ENCODE measurements at regions of chrX and their contacts with region 1.

Region 1: GRCh38 chrX:49155900-49156837 is 6.4 kb upstream of the MAGIX start:
- DNase-seq: peak; percentile 91
- H3K4me3 Mint-ChIP-seq: peak overlapping the region; percentile 96
- H3K27ac Mint-ChIP-seq: peak overlapping the region; percentile 99
- H3K4me1 Mint-ChIP-seq: peaks cover 7% of the 10 kb centered on the region
- H3K27me3 Mint-ChIP-seq: no peaks in the 10 kb centered on the region
- CTCF ChIP-seq: peak; percentile 46

Region 2: DNA sequence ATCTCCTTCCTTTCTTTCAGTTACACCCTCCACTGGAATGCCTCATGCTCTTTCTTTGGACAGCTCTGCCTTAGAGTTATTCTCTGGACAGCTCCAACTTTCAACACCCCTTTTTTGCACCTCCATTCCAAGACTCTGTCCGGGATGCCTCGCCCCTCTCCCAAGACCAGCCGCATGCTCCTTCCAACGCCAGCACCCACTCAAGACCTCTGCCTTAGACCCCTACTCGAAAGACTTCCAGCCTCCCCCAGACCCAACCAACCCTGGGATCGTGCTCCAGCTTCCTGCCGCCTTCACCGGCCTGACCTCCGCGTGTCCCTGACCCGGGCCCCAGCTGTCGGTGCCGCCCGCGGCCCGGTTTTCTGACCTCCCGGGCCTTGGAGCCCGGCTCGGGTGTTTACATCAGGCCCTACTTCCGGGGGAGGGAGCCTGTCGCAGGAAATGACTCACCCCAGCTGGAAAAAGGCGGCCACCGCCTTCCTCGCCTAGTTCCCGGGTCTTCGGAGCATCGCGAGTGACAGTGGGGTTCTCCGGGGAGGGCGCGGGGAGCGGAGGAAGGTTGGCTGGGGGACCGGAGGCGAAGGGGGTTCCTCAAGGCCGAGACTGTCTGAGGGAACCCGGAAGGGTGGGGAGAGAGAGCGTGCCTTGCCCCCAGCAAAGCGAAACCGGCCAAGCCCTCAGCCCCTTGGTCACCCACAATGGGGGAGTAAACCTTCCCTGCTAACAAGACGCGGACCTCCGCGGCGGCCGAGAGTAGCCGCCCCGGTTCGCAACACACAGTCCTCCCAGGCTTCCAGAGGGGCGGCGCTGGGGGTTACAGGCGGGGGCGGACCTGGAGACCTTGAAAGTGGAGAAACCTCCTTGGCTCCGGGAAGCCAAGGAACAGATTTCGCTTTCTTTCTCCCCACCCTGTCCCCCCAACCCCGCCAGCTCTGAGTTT is 76.4 kb before region 1 on chrX and contains the start of gene WDR45:
- CTCF ChIA-PET with region 1: interaction called, 7 read pairs
- POLR2A ChIA-PET with region 1: interaction called, 11 read pairs
- intact Hi-C with region 1: no loop called
- DNase-seq: peak; percentile 68
- H3K4me3 Mint-ChIP-seq: peak within 1 kb of the TSS; percentile 86
- H3K27ac Mint-ChIP-seq: peak within 1 kb of the TSS; percentile 88
- H3K4me1 Mint-ChIP-seq: peaks cover 5% of the 10 kb centered on the region
- H3K27me3 Mint-ChIP-seq: no peaks in the 10 kb centered on the region
- CTCF ChIP-seq: no peak
- total RNA-seq, gene WDR45: 93.0 and 96.9 TPM in 2 replicates

Region 3: DNA sequence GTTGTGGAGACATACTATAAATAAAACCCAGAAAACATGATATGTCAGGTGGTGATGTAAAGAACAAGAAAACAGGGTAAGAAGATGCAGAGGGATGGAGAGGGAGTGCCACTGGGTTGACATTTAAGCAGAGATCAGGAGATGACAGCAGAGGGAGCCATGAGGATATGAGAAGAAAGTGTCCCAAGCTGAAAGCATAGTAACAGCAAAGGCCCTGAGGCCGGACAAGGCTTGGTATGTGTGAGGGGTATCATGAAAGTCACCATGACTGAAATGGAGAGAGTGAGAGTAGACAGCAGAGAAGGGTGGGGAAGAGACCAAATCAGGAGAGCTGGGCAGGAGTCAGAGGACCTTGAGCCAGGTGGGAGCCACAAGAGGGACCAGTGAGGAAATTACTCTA is 36.1 kb before region 1 on chrX:
- CTCF ChIA-PET with region 1: no interaction called
- POLR2A ChIA-PET with region 1: no interaction called
- intact Hi-C with region 1: loop called (anchors 5 kb)
- DNase-seq: no peak
- H3K4me3 Mint-ChIP-seq: no peak overlapping the region
- H3K27ac Mint-ChIP-seq: no peak overlapping the region
- H3K4me1 Mint-ChIP-seq: no peaks in the 10 kb centered on the region
- H3K27me3 Mint-ChIP-seq: no peaks in the 10 kb centered on the region
- CTCF ChIP-seq: no peak

Region 4: GRCh38 chrX:49291615-49292337 is 135.6 kb after region 1 on chrX:
- CTCF ChIA-PET with region 1: no interaction called
- POLR2A ChIA-PET with region 1: no interaction called
- intact Hi-C with region 1: no loop called
- DNase-seq: peak; percentile 57
- H3K4me3 Mint-ChIP-seq: no peak overlapping the region
- H3K27ac Mint-ChIP-seq: no peak overlapping the region
- H3K4me1 Mint-ChIP-seq: no peaks in the 10 kb centered on the region
- H3K27me3 Mint-ChIP-seq: peaks cover 13% of the 10 kb centered on the region
- CTCF ChIP-seq: peak; percentile 52

Region 5: GRCh38 chrX:49303346-49303745 is 147.2 kb after region 1 on chrX and contains the start of gene GAGE10:
- CTCF ChIA-PET with region 1: no interaction called
- POLR2A ChIA-PET with region 1: no interaction called
- intact Hi-C with region 1: no loop called
- DNase-seq: no peak
- H3K4me3 Mint-ChIP-seq: no peak within 1 kb of the TSS
- H3K27ac Mint-ChIP-seq: no peak within 1 kb of the TSS
- H3K4me1 Mint-ChIP-seq: peaks cover 1% of the 10 kb centered on the region
- H3K27me3 Mint-ChIP-seq: peaks cover 28% of the 10 kb centered on the region
- CTCF ChIP-seq: no peak
- total RNA-seq, gene GAGE10: not detected in 2 replicates